HepG2 (cell line): ENCODE measurements at regions of chr17 and their contacts with region 1.

Region 1: DNA sequence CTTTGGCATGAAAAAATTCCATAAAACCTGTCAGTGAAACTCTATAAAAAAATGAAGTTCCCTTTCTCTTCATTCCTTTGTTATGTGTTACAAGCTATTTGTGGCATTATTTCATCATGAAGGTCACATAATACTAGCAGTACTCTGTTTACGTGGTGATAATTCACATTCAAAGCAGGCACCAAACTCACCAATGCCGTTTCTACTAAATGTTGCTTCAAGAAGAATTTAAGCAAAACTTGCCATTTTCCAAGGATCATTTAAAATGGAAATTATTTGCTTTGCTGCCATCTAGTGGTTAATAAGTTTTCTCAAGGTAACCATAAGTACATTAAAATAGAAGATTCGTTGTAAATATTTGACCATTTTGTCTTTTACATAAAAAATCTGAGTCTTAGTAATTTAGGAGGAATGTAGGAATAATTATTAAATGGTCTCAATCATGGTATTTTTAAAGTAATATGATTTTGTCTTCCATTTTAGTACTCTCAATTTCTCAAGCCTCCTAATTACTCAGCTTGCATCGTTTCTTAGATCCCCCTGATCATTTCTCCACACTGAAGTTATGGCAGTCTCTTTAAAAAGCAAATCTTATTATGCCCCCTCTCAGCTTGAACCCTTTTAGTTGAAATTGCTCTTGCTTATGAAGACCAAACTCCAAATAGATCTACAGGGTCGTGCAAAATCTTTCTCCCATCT is 80.8 kb downstream of the OMG start:
- DNase-seq: peak; percentile 12
- ATAC-seq: no peak
- H3K4me3 ChIP-seq: no peak overlapping the region
- H3K27ac ChIP-seq: no peak overlapping the region
- H3K4me1 ChIP-seq: no peaks in the 10 kb centered on the region
- H3K27me3 ChIP-seq: no peaks in the 10 kb centered on the region
- CTCF ChIP-seq: peak; percentile 50
- EP300 ChIP-seq: no peak
- POLR2A ChIP-seq: no peak
- RAD21 ChIP-seq: no peak

Region 2: GRCh38 chr17:31008374-31009041 is 207.7 kb before region 1 on chr17:
- CTCF ChIA-PET with region 1: interaction called, 15 read pairs
- POLR2A ChIA-PET with region 1: no interaction called
- in situ Hi-C with region 1: loop called (anchors 5 kb)
- intact Hi-C with region 1: no loop called
- DNase-seq: no peak
- ATAC-seq: peak; percentile 93
- H3K4me3 ChIP-seq: peak overlapping the region; percentile 42 to 69 (median 66); a peak in 5 of 6 replicates
- H3K27ac ChIP-seq: no peak overlapping the region
- H3K4me1 ChIP-seq: peaks cover 12% of the 10 kb centered on the region; the same call in 1 of the 2 replicates
- H3K27me3 ChIP-seq: peaks cover 0 to 15% of the 10 kb centered on the region in 2 experiments; a peak in 3 of 5 replicates
- CTCF ChIP-seq: no peak
- EP300 ChIP-seq: no peak
- POLR2A ChIP-seq: no peak
- RAD21 ChIP-seq: no peak

Region 3: DNA sequence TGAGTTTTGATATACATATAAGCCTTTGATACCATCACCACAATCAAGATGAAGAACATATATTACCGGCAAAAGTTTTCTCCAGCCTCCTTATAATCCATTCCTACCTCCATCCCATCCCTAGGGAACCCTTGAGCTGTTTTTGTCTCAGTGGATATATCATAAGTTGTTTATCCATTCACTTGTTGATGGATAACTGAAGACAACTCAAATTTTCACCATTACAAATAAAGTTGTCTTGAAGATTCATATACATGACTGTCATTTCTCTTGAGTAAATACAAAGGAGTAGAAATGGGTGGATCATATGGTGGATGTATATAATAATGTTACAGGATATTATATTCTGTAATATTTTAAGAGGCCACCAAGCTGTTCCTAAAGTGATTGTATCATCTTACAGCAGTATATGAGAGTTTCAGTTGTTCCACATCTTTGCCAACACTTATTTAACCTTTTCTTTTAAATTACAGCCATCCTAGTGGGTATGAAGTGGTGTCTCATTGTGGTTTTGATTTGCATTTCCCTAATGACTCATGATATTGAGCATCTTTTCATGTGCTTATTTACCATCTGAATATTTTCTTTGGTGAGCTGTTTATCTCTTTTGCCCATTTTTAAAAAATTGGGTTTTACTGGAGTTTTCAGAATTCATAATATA is 104.1 kb before region 1 on chr17:
- CTCF ChIA-PET with region 1: no interaction called
- POLR2A ChIA-PET with region 1: no interaction called
- in situ Hi-C with region 1: no loop called
- intact Hi-C with region 1: no loop called
- DNase-seq: no peak
- ATAC-seq: no peak
- H3K4me3 ChIP-seq: no peak overlapping the region
- H3K27ac ChIP-seq: no peak overlapping the region
- H3K4me1 ChIP-seq: peaks cover 16% of the 10 kb centered on the region
- H3K27me3 ChIP-seq: no peaks in the 10 kb centered on the region
- CTCF ChIP-seq: no peak
- EP300 ChIP-seq: no peak
- POLR2A ChIP-seq: no peak
- RAD21 ChIP-seq: no peak

Region 4: DNA sequence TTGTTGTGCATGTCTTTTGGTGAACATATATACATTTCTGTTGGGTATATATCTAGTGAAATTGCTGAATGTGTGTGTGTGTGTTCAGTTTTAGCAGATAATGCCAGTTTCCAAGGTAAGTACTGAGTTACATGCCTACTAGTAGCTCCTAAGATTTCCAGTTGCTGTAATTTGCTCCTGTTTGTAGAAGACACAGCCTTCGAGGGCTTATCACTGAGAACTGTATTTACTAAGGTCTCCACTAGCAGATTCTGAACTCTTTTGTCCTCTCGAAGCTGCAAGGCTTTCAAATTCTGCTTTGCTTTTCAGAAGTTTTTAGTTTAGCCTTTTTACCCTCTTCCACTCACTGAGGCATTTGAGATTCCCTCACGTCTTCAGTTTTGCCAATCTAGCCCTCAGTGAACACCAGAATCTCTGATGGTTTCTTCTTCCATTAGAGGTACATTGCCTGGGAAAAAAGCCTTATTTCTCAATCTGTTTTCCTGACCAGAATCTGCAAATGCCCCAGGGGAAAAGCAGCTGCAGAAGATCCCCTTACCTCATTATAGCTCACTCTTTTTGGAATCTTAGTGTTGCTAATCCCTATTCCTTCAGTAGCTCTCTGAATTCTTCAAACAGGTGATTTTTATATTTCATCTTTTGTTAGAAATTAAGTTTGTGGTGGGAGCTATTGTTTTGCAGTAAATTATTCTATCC is 68.5 kb before region 1 on chr17:
- CTCF ChIA-PET with region 1: no interaction called
- POLR2A ChIA-PET with region 1: no interaction called
- in situ Hi-C with region 1: no loop called
- intact Hi-C with region 1: no loop called
- DNase-seq: no peak
- ATAC-seq: no peak; the same call in 2 of the 3 replicates
- H3K4me3 ChIP-seq: no peak overlapping the region
- H3K27ac ChIP-seq: no peak overlapping the region
- H3K4me1 ChIP-seq: peaks cover 20% of the 10 kb centered on the region
- H3K27me3 ChIP-seq: no peaks in the 10 kb centered on the region
- CTCF ChIP-seq: no peak
- EP300 ChIP-seq: no peak
- POLR2A ChIP-seq: no peak
- RAD21 ChIP-seq: no peak